ENCODE measurements at regions of chr7 and their contacts with region 1.

Region 1: GRCh38 chr7:38796626-38797501 is 112.1 kb downstream of the VPS41 start:
- DNase-seq: peak in 4 of 5 donors; percentile 45 to 84 (median 65)
- H3K4me3 ChIP-seq: no peak overlapping the region
- H3K27ac ChIP-seq: no peak overlapping the region
- H3K4me1 ChIP-seq: no peaks in the 10 kb centered on the region
- H3K27me3 ChIP-seq: no peaks in the 10 kb centered on the region
- CTCF ChIP-seq: peak; percentile 81

Region 2: GRCh38 chr7:39517240-39517639 is 720.4 kb after region 1 on chr7:
- intact Hi-C with region 1: loop called (anchors 5 kb)
- DNase-seq: no peak
- H3K4me3 ChIP-seq: no peak overlapping the region
- H3K27ac ChIP-seq: no peak overlapping the region
- H3K4me1 ChIP-seq: no peaks in the 10 kb centered on the region
- H3K27me3 ChIP-seq: no peaks in the 10 kb centered on the region
- CTCF ChIP-seq: no peak

Measured in kidney (tissue), 22 donors.